IMR-90 (cell line): ENCODE measurements at regions of chr2 and their contacts with region 1.

Region 1: GRCh38 chr2:241417626-241418025 is 61.5 kb downstream of the FARP2 start:
- DNase-seq: no peak
- ATAC-seq: no peak
- H3K4me3 ChIP-seq: no peak overlapping the region
- H3K27ac ChIP-seq: no peak overlapping the region
- H3K4me1 ChIP-seq: peaks cover 6% of the 10 kb centered on the region; the same call in 1 of the 2 replicates
- H3K27me3 ChIP-seq: no peaks in the 10 kb centered on the region
- CTCF ChIP-seq: no peak
- POLR2A ChIP-seq: no peak
- RAD21 ChIP-seq: no peak

Region 2: DNA sequence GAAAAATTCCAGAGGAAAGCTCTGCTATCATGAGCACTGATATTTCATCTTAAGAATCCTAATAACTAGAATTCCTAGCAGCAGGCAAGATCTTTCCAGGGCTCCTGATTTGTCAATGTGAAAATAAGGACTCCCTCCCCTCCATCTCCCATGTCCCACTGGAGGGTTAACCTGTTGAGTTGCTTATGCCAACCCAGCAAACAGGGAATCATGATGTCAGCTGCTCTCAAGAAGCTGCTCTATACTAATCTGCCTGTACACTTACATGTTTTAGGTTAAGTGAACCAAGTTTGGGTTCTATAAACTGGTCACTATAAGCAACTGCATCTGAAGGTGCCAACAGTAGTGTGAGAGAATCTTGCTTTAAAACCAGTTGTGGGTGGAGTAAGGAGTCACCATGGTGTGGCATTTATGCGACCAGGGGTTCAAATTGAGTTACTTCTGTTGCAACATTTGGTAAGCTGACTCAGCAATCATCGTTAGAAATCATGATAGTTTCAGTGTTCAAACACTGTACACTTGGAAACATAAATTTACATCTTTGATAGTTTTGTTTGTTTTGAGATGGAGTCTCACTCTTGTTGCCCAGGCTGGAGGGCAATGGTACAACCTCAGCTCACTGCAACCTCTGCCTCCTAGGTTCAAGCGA is 37.3 kb after region 1 on chr2:
- CTCF ChIA-PET with region 1: no interaction called
- POLR2A ChIA-PET with region 1: no interaction called
- dilution Hi-C with region 1: no loop called
- in situ Hi-C with region 1: no loop called
- intact Hi-C with region 1: loop called (anchors 5 kb)
- DNase-seq: no peak
- ATAC-seq: no peak
- H3K4me3 ChIP-seq: no peak overlapping the region
- H3K27ac ChIP-seq: no peak overlapping the region
- H3K4me1 ChIP-seq: no peaks in the 10 kb centered on the region
- H3K27me3 ChIP-seq: no peaks in the 10 kb centered on the region
- CTCF ChIP-seq: no peak
- POLR2A ChIP-seq: no peak
- RAD21 ChIP-seq: no peak

Region 3: DNA sequence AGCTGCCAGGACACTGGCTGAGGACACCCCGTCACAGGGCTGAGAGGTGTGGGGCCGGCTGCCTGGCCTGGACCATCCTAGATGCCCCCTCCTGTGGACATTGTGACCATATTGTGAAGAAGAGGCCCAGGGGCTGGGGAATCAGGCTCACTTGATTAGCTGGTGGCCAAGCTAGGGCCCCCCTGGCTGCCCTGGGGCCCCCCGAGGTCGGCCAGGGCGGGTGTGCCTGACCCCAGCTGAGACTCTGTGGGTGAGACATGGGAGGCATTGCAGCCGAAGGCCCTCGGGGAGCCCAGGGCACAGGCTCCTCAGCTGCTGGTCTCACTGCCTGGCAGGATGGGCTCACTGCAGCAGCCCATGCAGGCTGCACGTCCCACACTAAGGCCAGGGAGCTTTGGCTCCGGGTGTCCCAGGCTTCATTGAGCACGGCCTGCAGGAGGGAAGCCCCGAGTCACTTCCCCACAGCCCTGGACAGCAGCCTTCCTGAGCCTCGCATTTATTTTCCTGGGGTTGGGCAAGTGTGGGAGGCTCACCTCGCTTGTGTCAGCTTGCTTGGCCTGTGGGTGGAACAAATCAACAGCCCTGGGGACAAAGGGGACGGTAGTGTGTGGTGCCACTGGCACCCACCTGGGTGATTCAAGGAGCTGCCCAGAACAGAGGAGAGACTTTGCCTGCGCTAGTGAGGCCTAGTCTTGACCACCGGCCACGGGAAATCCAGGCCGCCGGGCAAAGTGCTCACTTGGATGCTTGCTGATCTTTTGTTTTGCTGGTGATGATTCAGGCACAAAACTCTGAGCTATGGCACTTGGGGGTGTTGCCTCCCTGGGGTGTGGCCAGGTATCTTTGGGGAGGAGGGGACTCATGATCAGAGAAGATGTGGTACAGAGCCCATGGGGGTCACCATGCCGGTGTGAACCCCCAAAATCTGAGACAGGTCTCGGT is 360.3 kb after region 1 on chr2:
- CTCF ChIA-PET with region 1: no interaction called
- POLR2A ChIA-PET with region 1: no interaction called
- dilution Hi-C with region 1: no loop called
- in situ Hi-C with region 1: no loop called
- intact Hi-C with region 1: no loop called
- DNase-seq: no peak
- ATAC-seq: no peak
- H3K4me3 ChIP-seq: no peak overlapping the region
- H3K27ac ChIP-seq: no peak overlapping the region
- H3K4me1 ChIP-seq: peaks cover 6% of the 10 kb centered on the region
- H3K27me3 ChIP-seq: no peaks in the 10 kb centered on the region; the same call in 1 of the 2 replicates
- CTCF ChIP-seq: no peak
- POLR2A ChIP-seq: no peak
- RAD21 ChIP-seq: no peak